ENCODE measurements at regions of chr3 and their contacts with region 1.

Region 1: GRCh38 chr3:160941885-160942494 is 163.2 kb downstream of the B3GALNT1 start:
- DNase-seq: peak; percentile 90
- ATAC-seq: peak; percentile 88
- H3K4me3 ChIP-seq: no peak overlapping the region
- H3K27ac ChIP-seq: no peak overlapping the region
- H3K4me1 ChIP-seq: no peaks in the 10 kb centered on the region
- H3K27me3 ChIP-seq: no peaks in the 10 kb centered on the region
- CTCF ChIP-seq: peak; percentile 92

Region 2: DNA sequence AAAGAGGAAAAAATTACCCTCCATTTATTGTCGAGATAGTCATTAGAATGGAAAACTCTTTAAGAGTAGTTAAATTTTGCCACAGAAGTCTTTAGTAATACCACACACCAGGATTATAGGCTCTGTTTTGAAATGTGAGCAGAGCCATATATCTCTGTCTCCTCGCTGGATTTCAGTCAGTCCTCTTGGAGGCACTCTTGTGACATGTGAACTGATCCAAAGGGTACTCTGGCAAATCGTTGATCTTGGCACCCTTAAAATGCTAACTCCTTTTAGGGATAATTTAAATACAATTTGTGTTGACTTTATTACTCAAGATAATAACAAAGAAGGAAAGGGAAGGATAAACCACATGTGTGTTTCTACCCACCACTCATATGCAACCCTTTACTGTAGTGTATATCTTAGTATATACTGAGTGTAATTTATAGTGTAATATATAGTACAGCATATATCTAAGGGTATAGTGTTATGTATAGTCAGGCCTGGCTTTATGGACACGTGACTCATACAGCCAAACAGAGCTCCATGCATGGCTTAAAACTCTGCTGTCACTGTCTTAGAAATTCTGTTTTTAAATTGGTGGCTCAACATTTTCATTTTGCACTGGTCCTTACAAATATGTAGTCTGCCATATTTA is 364.3 kb before region 1 on chr3:
- CTCF ChIA-PET with region 1: no interaction called
- POLR2A ChIA-PET with region 1: no interaction called
- intact Hi-C with region 1: loop called (anchors 1 kb)
- DNase-seq: peak; percentile 85
- ATAC-seq: peak; percentile 98
- H3K4me3 ChIP-seq: no peak overlapping the region
- H3K27ac ChIP-seq: no peak overlapping the region
- H3K4me1 ChIP-seq: peaks cover 11% of the 10 kb centered on the region
- H3K27me3 ChIP-seq: no peaks in the 10 kb centered on the region
- CTCF ChIP-seq: peak; percentile 90

Region 3: GRCh38 chr3:160653512-160653911 is 288.5 kb before region 1 on chr3:
- CTCF ChIA-PET with region 1: no interaction called
- POLR2A ChIA-PET with region 1: interaction called, 3 read pairs
- intact Hi-C with region 1: loop called (anchors 5 kb)
- DNase-seq: peak; percentile 27
- ATAC-seq: peak; percentile 87
- H3K4me3 ChIP-seq: no peak overlapping the region
- H3K27ac ChIP-seq: no peak overlapping the region
- H3K4me1 ChIP-seq: peaks cover 11% of the 10 kb centered on the region
- H3K27me3 ChIP-seq: no peaks in the 10 kb centered on the region
- CTCF ChIP-seq: peak; percentile 61

Region 4: DNA sequence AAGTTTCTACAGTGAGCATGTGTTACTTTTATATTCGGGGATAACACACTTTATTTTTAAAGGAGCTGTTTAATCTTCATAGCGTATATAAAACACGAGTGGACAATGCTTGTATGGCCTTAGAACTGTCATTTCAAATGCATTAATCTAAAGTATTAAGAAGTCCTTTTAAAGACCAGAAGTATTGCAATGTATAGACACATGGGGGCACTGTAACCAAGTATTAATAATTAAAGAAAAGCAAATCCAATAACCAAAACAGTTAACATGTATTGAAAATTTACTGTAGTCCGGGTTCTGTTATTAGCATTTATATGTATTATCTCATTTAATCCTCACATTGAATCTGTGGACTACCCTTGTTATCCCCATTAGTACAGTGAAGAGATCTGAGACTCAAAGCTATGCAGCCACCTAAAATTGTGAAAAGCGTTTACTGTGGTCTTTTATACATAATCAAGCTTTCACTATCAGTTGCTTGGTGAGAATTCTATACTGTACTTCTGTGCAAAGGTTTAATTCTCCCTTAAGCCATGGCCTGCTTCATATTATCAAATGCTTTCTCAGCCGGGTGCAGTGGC is 254.9 kb before region 1 on chr3:
- CTCF ChIA-PET with region 1: no interaction called
- POLR2A ChIA-PET with region 1: no interaction called
- intact Hi-C with region 1: loop called (anchors 1 kb)
- DNase-seq: peak; percentile 59
- ATAC-seq: 0 out of 2 replicates have a peak, but pooled peaks have one; percentile 33
- H3K4me3 ChIP-seq: no peak overlapping the region
- H3K27ac ChIP-seq: no peak overlapping the region
- H3K4me1 ChIP-seq: no peaks in the 10 kb centered on the region
- H3K27me3 ChIP-seq: no peaks in the 10 kb centered on the region
- CTCF ChIP-seq: peak; percentile 82

Region 5: DNA sequence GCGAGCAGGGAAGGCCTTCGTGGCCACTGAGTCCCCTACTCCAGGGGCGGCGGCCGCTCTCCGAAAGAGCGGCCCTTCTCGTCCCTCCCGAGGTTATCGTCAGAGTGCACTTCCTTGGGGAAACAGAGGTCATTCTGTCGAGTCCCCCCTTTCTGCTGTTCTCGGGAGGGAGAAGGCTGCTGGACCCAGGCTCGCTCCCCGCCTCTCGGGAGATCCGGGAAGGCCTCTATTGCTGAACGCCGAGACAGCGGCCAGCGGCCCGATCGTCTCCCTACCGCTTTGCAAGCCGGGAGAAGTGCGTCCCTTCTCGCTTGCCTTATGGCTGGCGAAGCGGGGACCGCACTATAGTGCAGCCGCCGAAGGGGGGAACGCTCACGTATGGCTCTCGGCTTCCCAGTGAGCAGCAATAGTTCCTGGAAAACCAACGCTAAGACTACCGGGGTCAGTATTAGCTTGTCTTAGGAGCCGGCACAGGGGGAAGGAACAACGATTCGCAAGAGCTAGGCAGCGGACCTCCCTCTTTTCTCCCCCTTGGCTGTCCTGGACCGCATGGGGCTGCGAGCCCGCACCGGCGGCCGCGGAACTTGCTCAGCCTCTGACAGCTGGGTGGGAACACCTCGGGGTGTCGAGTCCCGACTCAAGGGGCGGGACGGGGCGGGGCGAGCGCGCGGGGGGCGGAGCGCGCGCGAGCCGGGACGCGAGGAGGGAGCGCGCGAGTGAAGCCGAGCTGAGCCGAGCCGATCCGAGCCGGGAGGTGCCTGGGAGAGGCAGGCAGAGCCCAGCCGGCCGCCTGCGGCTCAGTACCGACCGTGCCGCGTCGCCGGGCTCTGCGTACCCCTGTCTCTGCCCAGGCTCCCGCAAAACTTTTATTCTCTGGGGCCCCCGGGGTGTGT is 186.9 kb before region 1 on chr3:
- CTCF ChIA-PET with region 1: interaction called, 4 read pairs
- POLR2A ChIA-PET with region 1: no interaction called
- intact Hi-C with region 1: loop called (anchors 5 kb)
- DNase-seq: peak; percentile 96
- ATAC-seq: peak; percentile 89
- H3K4me3 ChIP-seq: peak overlapping the region; percentile 88
- H3K27ac ChIP-seq: peak overlapping the region; percentile 50
- H3K4me1 ChIP-seq: peaks cover 5% of the 10 kb centered on the region; the same call in 1 of the 2 replicates
- H3K27me3 ChIP-seq: no peaks in the 10 kb centered on the region
- CTCF ChIP-seq: no peak

Region 6: GRCh38 chr3:160921020-160921635 is 20.9 kb before region 1 on chr3:
- CTCF ChIA-PET with region 1: no interaction called
- POLR2A ChIA-PET with region 1: no interaction called
- intact Hi-C with region 1: loop called (anchors 1 kb)
- DNase-seq: peak; percentile 75
- ATAC-seq: peak; percentile 94
- H3K4me3 ChIP-seq: no peak overlapping the region
- H3K27ac ChIP-seq: no peak overlapping the region
- H3K4me1 ChIP-seq: no peaks in the 10 kb centered on the region
- H3K27me3 ChIP-seq: no peaks in the 10 kb centered on the region
- CTCF ChIP-seq: peak; percentile 95

Measured in PC-3 (cell line).